AG04449 (cell line): ENCODE measurements at regions of chr4 and their contacts with region 1.

Region 1: DNA sequence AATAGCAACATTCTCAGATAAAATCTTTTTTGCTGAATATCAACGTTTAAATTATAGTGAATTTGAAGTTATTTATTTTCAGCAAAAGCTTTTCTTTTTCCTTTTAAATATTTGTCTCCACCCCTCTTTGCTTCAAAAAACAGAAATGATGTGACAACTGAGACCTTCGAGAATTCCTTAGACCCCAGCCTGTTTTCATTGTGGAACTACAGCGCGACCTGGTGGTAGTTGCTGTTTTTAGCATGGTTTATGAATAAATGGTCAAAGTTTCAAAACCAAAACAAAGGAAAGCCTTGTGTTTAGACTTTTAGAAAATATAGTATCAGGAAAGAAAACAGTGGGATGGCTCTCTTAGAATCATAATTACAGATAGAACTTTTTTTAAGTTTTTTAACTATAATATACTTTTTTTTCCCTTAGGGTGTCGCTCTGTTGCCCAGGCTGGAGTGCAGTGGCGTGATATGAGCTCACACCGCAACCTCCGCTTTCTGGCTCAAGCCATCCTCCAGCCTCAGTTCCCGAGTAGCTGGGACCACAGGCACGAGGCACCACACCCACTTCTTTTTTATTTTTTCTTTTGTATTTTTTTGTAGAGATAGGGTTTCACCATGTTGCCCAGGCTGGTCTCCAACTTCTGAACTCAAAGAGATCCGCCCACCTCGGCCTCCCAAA is 26.8 kb upstream of the TMEM184C start:
- DNase-seq: no peak
- H3K4me3 ChIP-seq: no peak overlapping the region
- CTCF ChIP-seq: peak; percentile 55

Region 2: DNA sequence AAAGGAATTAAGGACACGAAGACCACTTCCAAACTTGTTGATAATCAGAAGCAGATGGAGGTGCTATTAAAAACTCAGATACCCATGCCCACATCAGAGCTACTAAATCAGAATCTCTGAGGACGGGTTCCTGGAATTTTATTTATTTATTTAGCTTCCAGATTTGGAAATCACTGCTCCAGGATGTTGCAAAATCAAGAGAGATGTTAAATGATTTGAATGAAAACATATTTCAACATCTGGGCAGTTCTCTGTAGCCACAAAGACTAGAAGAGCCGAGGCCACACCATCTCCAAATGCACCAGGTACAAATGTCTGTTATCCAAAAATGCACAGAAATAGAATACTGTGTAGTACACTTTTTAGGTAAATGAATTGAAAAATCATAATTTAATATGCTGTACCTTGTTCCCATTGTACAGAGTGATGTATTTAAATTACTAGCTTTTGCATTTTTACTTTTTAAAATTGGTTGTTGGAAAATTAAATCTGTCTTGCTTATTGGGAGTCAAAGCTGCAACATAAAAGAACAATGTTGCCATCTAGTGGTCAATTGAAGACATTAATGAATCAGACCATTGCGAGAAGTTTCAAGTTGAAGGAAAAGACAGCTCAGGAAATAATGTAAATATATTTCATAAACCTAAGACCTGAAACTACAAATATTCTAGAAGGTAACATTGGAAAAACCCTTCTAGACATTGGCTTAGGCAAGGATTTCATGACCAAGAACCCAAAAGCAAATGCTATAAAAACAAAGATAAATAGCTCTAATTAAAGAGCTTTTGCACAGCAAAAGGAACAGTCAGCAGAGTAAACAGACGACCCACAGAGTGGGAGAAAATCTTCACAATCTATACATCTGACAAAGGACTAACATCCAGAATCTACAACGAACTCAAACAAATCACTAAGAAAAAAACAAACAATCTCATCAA is 493.4 kb before region 1 on chr4:
- CTCF ChIA-PET with region 1: interaction called, 21 read pairs
- POLR2A ChIA-PET with region 1: no interaction called
- DNase-seq: no peak
- H3K4me3 ChIP-seq: no peak overlapping the region
- CTCF ChIP-seq: peak; percentile 32

Region 3: GRCh38 chr4:147111033-147111367 is 479.4 kb before region 1 on chr4:
- CTCF ChIA-PET with region 1: interaction called, 151 read pairs
- POLR2A ChIA-PET with region 1: no interaction called
- DNase-seq: no peak
- H3K4me3 ChIP-seq: no peak overlapping the region
- CTCF ChIP-seq: no peak

Region 4: DNA sequence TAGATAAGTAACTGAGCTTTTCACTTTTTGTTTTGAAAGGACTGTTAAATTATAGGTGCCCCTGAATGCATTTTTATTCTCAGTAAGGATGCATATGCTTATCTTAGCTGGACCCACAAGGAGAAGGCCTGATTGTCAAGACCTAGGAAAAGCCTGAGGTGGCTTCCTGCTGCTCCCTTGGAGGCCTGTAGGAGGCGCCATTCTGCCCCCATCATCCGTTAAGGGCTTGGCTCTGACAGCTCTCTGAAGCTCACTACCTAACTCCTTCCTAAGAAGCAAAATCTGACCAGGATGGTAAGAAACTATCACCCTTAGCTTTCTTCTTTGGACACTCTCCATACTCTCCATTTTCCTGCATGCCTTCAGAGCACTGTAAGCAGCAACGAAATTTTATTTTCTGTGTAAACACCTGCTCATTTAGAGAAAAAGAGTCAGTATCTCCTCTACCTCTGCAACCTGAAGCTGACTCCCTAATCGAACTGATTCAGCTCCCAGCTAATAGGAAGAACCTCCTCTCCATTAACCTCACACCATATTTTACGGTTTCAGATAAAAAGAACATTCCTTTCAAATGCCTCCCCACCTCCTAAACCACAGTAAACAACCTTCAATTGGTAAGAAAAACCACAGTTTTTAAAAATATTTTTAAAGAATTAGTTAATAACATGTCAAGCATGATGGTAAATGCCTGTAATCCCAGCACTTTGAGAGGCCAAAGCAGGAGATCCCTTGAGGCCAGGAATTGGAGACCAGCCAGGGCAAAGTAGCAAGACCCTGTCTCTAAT is 182.9 kb before region 1 on chr4:
- CTCF ChIA-PET with region 1: interaction called, 15 read pairs
- POLR2A ChIA-PET with region 1: no interaction called
- DNase-seq: no peak
- H3K4me3 ChIP-seq: no peak overlapping the region
- CTCF ChIP-seq: peak; percentile 15

Region 5: DNA sequence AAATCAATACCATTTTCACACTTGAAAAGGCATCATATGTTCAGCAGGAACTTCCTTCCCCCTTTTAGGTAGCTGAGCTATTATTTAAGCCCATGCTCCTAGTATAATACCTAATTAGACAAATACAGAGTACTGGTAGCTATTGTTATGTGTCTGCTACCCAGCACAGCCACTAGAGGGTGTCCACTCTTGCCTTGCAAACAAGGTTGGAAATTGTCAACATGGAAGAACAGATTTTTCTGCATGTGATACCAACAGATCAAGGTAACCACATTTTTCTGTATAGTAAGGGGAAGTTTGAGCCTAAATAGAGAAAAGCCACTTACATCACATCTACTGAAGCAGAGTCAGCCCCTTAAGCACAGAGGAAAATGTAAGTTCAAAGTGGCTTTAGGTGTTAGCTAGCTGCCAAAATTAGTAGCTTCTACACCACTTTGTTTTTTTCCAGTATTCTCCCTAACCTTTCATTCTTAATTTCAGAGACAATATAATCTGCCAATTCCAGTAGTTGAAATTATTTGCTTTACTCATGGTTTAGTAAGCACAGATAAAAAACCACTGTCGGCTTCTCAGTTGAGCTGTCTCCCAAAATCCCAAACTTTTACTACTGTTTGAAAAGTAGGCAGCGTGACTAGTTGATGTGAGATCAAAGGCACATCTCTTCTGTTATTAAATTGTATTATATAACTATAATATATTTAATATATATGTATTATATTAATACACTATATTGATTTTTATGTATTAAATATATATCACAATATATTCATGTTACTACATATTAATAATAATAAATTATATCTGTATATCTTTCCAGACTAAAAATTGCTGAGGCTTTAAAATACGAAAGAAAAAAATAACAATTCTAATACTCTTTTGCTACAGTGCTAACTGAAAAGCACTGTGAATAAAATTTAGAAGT is 71.3 kb before region 1 on chr4:
- CTCF ChIA-PET with region 1: interaction called, 53 read pairs
- POLR2A ChIA-PET with region 1: no interaction called
- DNase-seq: no peak
- H3K4me3 ChIP-seq: no peak overlapping the region
- CTCF ChIP-seq: peak; percentile 82

Region 6: DNA sequence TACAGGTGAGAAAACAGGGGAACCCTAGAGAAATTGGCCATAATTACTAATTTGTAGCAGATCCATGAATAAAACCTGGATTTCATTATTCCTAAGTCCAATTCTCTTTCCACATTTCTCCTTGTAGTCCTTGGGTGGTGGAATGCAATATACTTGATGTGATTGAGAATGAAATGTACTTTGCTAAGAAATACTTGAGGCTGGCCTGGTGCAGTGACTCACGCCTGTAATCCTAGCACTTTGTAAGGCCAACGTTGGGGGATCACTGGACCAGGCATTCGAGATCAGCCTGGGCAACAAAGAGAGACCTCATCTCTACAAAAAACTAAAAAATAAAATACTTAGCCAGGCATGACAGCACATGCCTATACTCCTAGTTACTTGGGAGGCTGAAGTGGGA is 42.7 kb after region 1 on chr4:
- CTCF ChIA-PET with region 1: no interaction called
- POLR2A ChIA-PET with region 1: no interaction called
- DNase-seq: no peak
- H3K4me3 ChIP-seq: no peak overlapping the region
- CTCF ChIP-seq: no peak